ENCODE measurements at regions of chr5 and their contacts with region 1.

Region 1: DNA sequence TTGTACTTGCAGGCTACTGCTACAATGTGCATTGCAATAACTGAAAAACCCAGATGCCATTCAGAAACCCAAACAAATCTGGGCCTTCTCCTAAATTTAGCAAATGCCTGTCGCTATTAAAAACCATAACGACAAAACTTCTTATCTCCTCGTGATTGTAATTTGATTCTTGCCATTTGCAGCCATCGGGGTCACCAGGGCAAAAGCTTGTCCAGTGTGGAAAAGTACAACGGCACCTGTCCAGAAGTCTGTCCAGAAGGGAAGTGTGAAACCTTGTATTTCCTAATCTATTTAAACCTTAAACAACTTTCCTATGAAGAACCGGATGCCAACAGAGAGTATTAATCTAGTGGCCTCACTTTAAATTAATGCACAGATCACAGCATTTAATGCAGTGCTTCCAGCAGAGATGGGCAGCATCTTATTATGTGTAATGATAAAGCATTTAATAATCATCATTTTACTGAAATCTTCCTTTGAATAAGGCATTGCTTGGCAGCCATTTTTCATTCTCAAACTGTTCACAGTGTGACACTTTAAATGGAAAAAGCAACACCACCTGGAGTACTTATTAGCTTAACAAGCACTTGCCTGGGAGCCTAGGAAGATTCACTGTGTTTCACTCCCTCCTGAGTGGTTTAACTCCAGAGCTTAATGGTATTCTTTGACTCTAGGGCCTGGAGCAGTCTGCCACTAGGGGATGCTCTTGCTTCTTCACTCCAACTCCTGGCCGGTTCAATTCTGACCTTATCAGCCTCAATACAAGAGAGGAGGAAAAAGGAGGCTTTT is 4.9 kb upstream of the C7 start:
- DNase-seq: peak; percentile 34 to 78
- ATAC-seq: peak; percentile 93 to 96 (median 94)
- H3K4me3 ChIP-seq: no peak overlapping the region
- H3K27ac ChIP-seq: peak overlapping the region in 9 of 10 donors; percentile 6 to 67 (median 57)
- H3K4me1 ChIP-seq: peaks cover 0 to 24% (median 17%) of the 10 kb centered on the region in 9 donors
- H3K27me3 ChIP-seq: no peaks in the 10 kb centered on the region
- CTCF ChIP-seq: peak; percentile 91 to 98 (median 94)

Region 2: GRCh38 chr5:41186143-41186542 is 281.7 kb after region 1 on chr5:
- intact Hi-C with region 1: loop called in 2 of 10 experiments (anchors 5 to 10 kb)
- DNase-seq: no peak
- ATAC-seq: peak in 6 of 8 donors; percentile 20 to 56 (median 35)
- H3K4me3 ChIP-seq: peak overlapping the region in 5 of 10 donors; percentile 1 to 31 (median 9)
- H3K27ac ChIP-seq: peak overlapping the region in 7 of 10 donors; percentile 1 to 62 (median 36)
- H3K4me1 ChIP-seq: peaks cover 0 to 26% (median 18%) of the 10 kb centered on the region in 9 donors
- H3K27me3 ChIP-seq: no peaks in the 10 kb centered on the region
- CTCF ChIP-seq: no peak

Region 3: DNA sequence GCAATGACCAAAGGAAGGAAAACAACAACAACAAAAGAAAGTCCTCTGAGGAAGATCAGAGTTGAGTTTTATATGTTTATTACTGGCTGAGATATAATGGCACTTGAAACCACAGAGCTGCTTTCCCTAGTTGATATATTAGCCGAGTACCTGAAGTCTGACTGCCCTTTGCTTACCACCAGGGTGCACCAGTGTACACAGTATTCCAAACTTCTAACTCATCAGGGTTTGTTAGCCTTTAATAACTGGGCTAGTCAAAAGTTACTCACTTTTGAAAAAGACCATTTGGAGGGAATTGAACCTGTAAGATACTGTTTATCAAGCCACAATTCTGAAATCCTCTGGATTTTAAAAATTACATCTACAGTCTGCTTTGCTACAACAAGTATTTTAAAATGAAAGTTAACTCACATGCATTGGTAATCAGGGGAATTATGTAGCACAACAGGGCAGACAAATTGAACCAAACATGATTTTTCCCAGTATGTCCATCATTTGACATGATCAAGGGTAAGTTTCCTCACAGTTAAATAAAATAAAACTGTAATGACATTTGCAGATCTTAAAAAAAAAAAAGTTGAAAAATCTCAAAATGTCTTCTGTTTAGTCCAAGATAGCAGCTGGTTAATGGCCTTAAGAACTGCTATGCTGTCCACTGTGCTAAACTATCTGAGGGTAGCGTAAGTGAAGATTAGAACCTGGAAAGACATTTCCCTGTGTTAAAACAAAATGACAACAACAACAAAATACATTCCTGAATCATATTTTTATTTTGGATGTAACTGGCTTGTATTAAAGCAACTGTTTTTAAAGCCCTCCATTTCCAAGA is 366.2 kb after region 1 on chr5:
- intact Hi-C with region 1: loop called in 6 of 10 experiments (anchors 5 to 10 kb)
- DNase-seq: peak in 1 of 2 donors; percentile 71
- ATAC-seq: peak; percentile 82 to 94 (median 93)
- H3K4me3 ChIP-seq: no peak overlapping the region
- H3K27ac ChIP-seq: peak overlapping the region in 4 of 10 donors; percentile 28 to 45 (median 36)
- H3K4me1 ChIP-seq: peaks cover 0 to 21% (median 4%) of the 10 kb centered on the region in 9 donors
- H3K27me3 ChIP-seq: no peaks in the 10 kb centered on the region
- CTCF ChIP-seq: peak; percentile 39 to 83 (median 73)

Region 4: DNA sequence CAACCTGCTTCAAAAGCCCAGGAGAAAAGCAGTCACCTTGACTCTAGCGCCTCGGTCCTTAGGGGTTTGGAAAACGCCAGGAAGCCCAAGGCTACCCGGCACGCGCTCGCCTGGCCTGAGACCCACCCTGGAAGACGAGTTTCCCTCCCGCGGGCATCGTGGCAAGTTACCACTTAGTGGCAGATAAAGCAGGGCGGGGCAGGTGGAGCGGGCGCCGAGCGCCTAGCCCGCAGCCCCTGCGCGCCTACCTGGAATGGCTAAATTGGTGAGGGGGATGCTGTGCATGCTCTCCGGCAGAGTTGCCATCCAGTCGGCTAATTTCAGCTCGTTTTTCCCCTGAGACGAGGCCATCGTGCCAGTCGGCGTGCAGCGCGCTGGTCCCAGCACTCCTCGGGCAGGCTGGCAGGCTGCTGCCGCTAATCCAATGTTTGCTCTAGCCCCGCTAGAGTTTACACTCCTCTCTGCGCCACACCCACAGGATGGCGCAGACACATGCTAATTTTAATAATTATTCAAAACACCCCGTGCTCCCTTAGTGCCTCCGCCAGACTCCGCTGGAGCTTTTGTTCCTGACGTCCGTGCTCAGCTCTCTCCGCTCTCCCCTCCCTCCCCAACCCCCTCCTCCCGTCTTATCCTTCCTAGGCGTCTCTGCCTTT is 605.9 kb after region 1 on chr5 and contains the start of gene PLCXD3:
- intact Hi-C with region 1: loop called in 2 of 10 experiments (anchors 5 to 10 kb)
- DNase-seq: peak; percentile 45
- ATAC-seq: peak; percentile 87 to 96 (median 94)
- H3K4me3 ChIP-seq: peak within 1 kb of the TSS; percentile 62 to 78 (median 72)
- H3K27ac ChIP-seq: peak within 1 kb of the TSS; percentile 62 to 88 (median 80)
- H3K4me1 ChIP-seq: peaks cover 3 to 32% (median 15%) of the 10 kb centered on the region in 9 donors
- H3K27me3 ChIP-seq: peaks cover 0 to 16% (median 0%) of the 10 kb centered on the region in 7 donors
- CTCF ChIP-seq: no peak
- total RNA-seq, gene PLCXD3: 36.2 to 104 (median 55.5) TPM

Region 5: DNA sequence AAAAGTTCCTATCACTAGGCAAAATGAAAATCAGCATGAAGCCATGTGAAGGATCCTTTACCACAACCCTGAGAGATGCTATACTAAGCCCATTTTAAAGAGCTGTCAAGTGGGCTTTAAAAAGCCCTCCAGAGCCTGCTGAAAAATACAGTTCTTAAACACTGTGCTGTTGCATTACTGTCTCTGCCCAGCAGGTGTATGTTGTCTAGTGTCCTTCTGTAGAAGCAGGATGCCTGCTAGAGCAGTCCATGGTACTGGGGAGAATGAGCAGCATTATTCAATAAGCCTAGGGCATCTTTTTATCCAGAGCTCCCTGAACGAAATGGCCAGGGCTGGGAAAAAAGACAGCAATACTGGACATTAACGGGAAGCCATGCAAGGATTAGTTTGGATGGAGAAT is 732.2 kb after region 1 on chr5:
- intact Hi-C with region 1: loop called in 4 of 10 experiments (anchors 5 to 10 kb)
- DNase-seq: no peak
- ATAC-seq: no peak
- H3K4me3 ChIP-seq: no peak overlapping the region
- H3K27ac ChIP-seq: no peak overlapping the region
- H3K4me1 ChIP-seq: no peaks in the 10 kb centered on the region
- H3K27me3 ChIP-seq: no peaks in the 10 kb centered on the region
- CTCF ChIP-seq: peak in 4 of 9 donors; percentile 15 to 40 (median 20)

Region 6: DNA sequence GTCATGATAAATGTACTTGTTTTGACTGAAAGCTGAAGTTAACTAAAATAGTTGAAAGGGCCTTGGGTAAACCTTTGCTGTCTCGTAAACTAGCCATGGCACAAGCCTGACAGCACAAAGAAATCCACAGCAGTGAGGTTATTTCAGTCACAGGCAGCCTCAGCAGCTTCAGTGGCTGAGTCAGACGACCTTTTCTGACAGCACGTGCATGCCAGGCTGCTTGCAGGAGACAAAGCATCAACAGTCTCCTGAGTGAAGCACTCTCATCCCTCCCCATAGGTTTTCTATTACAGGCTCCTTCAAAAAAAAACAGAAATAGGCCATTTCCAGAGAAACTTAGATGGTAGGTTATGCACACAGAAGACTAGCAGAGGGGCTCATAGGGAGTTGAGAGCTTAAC is 931.2 kb after region 1 on chr5:
- intact Hi-C with region 1: loop called in 9 of 10 experiments (anchors 5 to 10 kb)
- DNase-seq: peak; percentile 36 to 69
- ATAC-seq: peak; percentile 84 to 99 (median 96)
- H3K4me3 ChIP-seq: no peak overlapping the region
- H3K27ac ChIP-seq: peak overlapping the region; percentile 10 to 83 (median 63)
- H3K4me1 ChIP-seq: peaks cover 0 to 31% (median 20%) of the 10 kb centered on the region in 9 donors
- H3K27me3 ChIP-seq: no peaks in the 10 kb centered on the region
- CTCF ChIP-seq: no peak